ENCODE measurements at regions of chr1 and their contacts with region 1.

Region 1: GRCh38 chr1:59730759-59731478 is 83.8 kb upstream of the HOOK1 start:
- DNase-seq: peak; percentile 83
- H3K4me3 ChIP-seq: no peak overlapping the region
- H3K27me3 ChIP-seq: no peaks in the 10 kb centered on the region
- CTCF ChIP-seq: no peak

Region 2: GRCh38 chr1:58755468-58755872 is 975.4 kb before region 1 on chr1:
- CTCF ChIA-PET with region 1: no interaction called
- POLR2A ChIA-PET with region 1: interaction called, 11 read pairs
- DNase-seq: peak; percentile 99
- H3K4me3 ChIP-seq: no peak overlapping the region
- H3K27me3 ChIP-seq: no peaks in the 10 kb centered on the region
- CTCF ChIP-seq: no peak

Region 3: DNA sequence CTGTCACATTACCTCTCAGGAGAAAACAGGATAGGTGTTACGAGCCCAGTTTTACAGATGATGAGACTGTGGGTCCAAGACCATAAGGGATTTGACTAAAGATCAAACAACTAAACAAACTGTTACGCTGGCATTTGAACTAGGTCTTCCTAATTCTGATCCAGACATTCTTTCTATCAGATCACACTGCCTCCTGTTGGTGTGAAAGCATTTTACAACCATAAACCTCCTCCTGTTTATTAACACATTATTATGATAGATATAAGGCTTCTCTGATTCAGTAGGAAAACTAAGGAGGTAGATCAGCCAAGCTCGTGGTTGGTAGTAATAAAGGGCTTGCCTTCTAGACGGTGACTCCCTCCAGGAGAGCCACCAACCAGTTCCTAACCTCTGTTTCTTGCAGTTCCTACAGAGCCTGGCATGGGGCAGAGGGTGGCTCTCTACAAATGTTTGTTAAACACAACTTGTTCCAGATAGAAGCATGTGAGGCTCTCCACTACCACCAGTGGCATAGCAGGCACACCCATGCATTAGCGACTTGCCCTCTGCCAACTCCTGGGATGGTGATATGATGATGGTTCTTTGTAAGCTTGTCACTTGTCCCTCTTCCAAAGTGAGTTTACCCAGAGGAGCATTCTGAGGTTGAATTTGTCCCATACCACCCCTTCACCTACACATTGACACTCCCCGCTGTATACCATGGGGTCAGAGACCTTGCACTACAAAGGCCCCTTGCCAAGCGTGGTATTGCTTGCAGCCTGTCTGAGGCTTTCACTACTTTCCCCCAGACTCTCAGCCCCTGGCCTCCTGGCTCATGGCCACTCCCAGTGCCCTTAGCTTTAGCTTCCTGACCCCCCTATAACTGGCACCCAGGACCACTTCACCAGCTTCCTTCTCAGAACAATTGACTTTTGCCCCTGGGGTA is 12.6 kb before region 1 on chr1:
- CTCF ChIA-PET with region 1: interaction called, 13 read pairs
- POLR2A ChIA-PET with region 1: no interaction called
- DNase-seq: no peak
- H3K4me3 ChIP-seq: no peak overlapping the region
- H3K27me3 ChIP-seq: no peaks in the 10 kb centered on the region
- CTCF ChIP-seq: peak; percentile 36

Region 4: DNA sequence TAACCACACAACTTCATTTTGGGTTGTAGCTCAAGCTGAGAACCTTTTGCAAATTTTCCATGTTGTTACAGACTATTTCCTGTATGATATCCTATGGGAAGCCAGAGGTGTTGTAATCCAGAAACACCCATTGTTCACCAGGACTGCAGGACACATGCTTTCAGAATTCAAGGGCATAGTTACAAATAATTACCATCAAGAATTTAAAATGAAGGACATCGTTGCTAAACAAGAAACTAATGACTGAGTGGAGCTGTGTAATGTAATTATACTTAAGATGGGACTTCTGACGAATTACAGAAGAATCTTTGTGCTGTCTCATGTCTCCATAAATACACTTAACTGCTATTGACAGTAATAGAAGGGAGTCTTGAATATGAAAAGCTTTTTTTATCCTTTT is 36.2 kb after region 1 on chr1:
- CTCF ChIA-PET with region 1: no interaction called
- POLR2A ChIA-PET with region 1: no interaction called
- DNase-seq: no peak
- H3K4me3 ChIP-seq: no peak overlapping the region
- H3K27me3 ChIP-seq: no peaks in the 10 kb centered on the region
- CTCF ChIP-seq: no peak

Region 5: DNA sequence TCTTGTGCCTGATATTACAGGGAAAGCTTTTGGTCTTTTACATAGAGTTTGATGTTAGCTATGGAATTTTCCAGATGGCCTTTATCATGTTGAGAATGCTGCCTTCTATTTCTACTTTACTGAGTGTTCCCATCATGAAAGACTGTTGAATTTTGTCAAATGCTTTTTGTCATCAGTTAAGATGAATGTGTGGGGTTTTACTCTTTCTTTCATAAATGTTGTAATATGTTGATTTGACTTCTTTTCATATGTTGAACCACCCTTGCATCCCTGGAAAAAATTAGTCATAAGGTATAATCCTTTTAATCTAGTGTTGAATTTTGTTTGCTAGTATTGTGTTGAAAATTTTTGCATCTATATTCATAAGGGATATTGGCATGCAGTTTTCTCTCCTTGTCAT is 67.7 kb after region 1 on chr1:
- CTCF ChIA-PET with region 1: no interaction called
- POLR2A ChIA-PET with region 1: no interaction called
- DNase-seq: no peak
- H3K4me3 ChIP-seq: no peak overlapping the region
- H3K27me3 ChIP-seq: no peaks in the 10 kb centered on the region
- CTCF ChIP-seq: no peak